Activated CD4-positive, alpha-beta memory T cell treated with anti-CD3 and anti-CD28 coated beads, Interleukin-2, amount 10 ng/mL, durations not matched to agents 7 days and 5 days (primary cell): ENCODE measurements at regions of chr2 and their contacts with region 1.

Region 1: GRCh38 chr2:161250864-161251436 is 57.3 kb upstream of the PSMD14 start:
- DNase-seq: no peak
- H3K4me3 Mint-ChIP-seq: no peak overlapping the region
- H3K27ac Mint-ChIP-seq: no peak overlapping the region
- H3K4me1 Mint-ChIP-seq: peaks cover 15% of the 10 kb centered on the region
- H3K27me3 Mint-ChIP-seq: no peaks in the 10 kb centered on the region

Region 2: DNA sequence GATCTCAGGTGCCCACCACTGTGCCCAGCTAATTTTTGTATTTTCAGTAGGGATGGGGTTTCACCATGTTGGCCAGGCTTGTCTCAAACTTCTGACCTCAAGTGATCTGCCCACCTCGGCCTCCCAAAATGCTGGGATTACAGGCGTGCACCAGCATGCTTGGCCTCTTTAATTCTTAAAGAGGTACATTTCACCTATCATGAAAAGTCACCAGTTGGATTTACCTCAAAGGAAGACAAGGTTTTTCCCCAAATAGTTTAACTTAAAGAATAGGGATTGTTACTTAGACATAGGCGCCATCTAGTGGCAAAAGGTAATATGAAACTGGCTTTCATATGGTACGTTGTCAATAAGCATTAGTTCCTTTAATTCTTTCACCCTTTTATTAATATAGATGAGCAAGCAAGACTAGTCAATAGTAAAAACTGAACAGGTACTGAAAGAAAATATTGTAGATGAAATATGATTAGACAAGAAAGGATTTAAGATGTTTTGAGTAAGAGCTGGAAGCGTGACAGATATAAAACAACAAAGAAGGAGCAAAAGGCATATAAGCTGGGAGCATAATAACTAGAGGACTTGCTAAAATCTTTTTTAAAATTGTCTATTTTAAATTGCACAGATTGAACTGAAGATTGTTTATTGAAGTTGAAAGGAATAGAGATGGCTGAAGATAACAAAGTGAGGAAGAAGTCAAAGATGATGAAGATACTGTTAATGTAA is 22.2 kb after region 1 on chr2:
- CTCF ChIA-PET with region 1: interaction called, 10 read pairs
- POLR2A ChIA-PET with region 1: interaction called, 3 read pairs
- DNase-seq: no peak
- H3K4me3 Mint-ChIP-seq: no peak overlapping the region
- H3K27ac Mint-ChIP-seq: no peak overlapping the region
- H3K4me1 Mint-ChIP-seq: peaks cover 1% of the 10 kb centered on the region
- H3K27me3 Mint-ChIP-seq: peaks cover 12% of the 10 kb centered on the region

Region 3: GRCh38 chr2:161373942-161374341 is 123.0 kb after region 1 on chr2:
- CTCF ChIA-PET with region 1: no interaction called
- POLR2A ChIA-PET with region 1: no interaction called
- DNase-seq: no peak
- H3K4me3 Mint-ChIP-seq: no peak overlapping the region
- H3K27ac Mint-ChIP-seq: no peak overlapping the region
- H3K4me1 Mint-ChIP-seq: no peaks in the 10 kb centered on the region
- H3K27me3 Mint-ChIP-seq: no peaks in the 10 kb centered on the region